Posterior cingulate gyrus (tissue), 11 donors: ENCODE measurements at regions of chr17 and their contacts with region 1.

Region 1: DNA sequence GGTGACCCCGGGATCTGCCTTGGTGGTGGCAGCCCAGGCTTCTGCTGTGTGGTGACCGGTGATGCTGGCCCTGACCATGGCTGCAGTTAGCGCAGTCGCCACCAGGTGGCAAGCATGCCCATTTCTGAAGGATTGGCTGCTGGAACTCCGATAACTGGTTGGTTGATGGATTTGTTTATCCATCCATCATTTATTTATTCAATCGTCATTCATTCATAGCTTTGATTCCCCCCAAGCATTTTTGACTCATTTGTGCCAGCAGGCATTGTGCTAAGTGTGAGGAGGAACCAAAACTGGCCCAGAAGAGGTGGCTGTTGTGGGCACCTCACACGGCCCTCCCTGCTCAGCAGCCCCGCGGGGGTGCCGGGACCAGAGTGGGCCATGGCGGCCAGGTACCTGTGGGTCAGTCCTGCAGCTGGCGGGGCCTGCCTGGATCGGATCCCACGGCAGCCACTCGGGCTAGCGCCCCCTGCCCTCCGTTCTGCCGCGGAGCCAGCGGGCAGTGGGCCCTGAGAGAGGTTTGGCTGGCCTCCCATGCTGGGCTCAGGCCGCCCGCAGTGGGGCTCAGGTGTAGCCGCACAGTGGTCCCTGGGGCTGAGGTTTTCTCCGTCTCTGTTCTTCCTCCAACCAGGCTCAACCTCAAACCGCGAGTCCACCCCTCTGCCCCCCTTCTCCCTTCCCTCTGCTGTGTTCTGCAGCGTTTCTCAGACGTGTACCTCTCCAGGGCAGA is 28.8 kb upstream of the ITGA3 start:
- DNase-seq: peak; percentile 72 to 97 (median 90)

Region 2: DNA sequence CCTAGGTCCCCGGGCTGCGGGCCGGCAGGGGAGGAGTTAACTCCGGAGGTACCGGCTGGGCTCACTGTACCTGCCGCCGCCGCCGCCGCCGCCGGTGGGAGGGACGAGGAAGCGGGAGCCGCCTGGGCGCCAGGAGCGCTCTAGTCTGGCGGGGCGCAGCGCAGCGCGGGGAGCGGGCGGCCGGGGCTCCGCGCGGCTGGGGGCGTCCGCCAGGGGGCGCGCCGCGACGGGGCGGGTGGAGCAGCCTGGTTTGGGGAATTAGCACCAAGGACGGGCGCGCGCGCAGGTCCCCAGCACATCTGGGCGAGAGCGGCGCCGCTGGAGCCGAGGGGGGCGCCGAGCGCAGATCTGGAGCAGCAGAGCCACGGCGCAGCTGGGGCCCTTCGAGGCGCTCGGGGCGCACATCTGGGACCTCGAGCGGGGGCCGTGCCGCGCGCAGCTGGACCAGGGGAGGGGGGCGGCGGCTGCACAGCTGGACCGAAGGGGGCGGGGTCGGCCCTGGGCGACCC is 451.4 kb before region 1 on chr17 and contains the start of gene NXPH3:
- intact Hi-C with region 1: no loop called
- DNase-seq: peak; percentile 43 to 94 (median 59)

Region 3: DNA sequence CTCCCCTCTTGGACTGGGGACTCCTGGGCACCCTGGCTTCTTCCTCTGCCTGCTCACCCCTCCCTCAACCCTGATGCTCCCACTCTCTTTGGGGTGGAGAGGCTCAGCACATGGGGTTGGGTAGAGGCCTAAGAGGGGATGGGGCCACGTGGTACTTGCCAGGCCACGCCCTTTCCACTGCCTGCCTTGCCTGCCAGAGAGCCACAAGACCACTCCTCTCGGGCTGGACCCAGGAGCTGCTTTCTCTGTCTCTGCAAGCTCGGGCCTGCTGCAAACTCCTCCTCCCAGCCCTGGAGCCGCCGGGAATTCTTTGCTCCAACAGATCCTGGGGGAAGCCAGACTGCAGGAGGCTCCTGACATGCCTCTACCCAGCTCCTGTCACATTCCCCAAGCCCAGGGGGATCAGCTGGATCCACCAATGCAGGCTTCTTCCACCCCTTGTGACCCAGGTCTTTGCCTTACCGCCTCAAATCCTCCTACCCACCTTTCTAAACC is 46.3 kb before region 1 on chr17:
- intact Hi-C with region 1: no loop called
- DNase-seq: peak in 1 of 10 donors; percentile 39

Region 4: DNA sequence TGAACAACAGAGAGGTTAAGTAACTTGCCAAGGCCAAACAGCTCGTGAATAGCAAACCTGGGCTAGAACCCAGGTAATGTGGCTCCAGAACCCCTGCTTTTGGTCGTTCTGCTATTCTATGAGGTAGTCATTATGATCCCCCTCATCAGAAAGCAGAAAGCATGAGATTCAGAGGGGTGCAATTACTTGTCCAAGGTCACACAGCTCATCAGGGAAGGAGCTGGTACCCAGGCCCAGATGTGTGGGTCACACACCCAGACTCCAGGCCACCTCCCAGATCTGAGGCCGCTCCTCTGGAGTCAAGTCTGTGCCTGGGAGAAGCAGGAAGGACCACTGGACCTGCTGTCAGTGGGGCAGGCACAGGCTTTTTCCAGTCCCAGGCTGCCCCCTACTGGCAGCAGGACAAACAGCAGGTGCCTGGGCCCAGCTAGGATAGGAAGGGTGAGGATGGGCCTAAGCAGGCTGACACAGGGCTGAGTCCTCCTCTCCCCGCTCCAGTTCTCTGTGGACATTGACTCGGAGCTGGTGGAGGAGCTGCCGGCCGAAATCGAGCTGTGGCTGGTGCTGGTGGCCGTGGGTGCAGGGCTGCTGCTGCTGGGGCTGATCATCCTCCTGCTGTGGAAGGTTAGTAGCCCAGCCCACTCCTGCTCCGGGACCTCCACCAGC is 60.3 kb after region 1 on chr17:
- intact Hi-C with region 1: loop called (anchors 1 kb)
- DNase-seq: peak in 8 of 10 donors; percentile 49 to 95 (median 65)